Activated CD4-positive, alpha-beta T cell treated with anti-CD3 and anti-CD28 coated beads for 36 hours (primary cell): ENCODE measurements at regions of chr1 and their contacts with region 1.

Region 1: DNA sequence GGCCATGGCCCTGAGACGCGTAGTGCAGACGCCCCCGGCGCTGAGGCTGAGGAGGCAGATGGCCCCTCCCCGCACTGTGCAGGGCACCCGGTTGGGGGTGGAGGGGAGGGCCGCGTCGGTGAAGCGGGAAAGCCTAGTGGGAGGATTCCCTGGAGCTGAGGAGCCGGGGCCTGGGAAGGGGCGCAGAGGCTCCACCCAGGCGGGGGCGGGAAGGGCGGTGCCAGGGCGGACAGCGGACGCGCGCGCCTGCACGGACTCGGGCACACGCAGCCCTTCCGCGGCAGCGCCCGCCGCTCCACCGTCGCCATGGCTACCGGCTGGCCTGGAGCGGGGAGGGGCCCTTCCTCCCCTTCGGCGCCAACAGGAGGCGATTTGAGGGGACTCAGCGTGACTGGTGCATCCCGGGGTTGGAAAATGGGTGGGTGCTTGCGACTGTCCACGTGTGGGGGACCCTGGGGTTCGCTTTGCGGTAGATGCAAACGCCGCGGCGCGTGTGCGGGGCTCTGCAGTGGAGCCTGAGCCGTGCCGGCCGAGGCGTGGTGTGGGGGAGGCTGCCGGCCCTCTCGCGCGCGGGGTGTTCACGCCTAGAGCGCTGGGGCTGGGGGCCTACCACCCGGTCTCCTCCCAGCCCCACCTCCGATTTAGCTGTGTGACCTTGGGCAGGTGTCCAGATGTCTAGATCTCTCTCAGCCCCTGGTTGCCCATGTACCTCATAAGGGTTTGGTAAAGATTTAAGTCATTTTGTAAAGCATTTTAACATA is 35.1 kb downstream of the PTPRF start:
- DNase-seq: peak; percentile 81
- ATAC-seq: peak; percentile 87
- H3K4me3 Mint-ChIP-seq: peak overlapping the region; percentile 62
- H3K27ac Mint-ChIP-seq: no peak overlapping the region
- H3K4me1 Mint-ChIP-seq: no peaks in the 10 kb centered on the region
- H3K27me3 Mint-ChIP-seq: peaks cover 11% of the 10 kb centered on the region

Region 2: DNA sequence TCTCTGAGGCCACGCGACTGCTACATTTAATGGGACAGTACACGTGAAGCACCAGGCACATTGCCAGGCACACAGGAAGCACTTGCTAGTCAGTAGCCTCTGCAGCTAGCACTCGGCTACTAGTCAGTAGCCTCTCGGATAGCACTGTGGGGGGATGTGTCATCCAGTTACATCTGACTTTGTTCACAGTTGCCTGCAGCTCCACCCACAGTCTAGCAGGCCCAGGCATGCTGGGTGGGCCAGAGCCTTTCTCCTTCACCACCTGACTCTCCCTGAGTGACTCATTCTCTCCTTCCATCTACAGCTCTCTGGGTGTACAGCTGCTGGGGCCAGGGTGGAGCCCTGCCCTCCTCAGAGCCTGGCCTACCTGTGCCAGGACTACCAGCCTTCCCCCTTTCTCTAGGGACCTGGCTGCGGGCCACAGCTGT is 16.4 kb after region 1 on chr1:
- CTCF ChIA-PET with region 1: no interaction called
- POLR2A ChIA-PET with region 1: no interaction called
- intact Hi-C with region 1: loop called in 1 of 2 experiments (anchors 1 kb)
- DNase-seq: peak; percentile 75
- ATAC-seq: peak; percentile 99
- H3K4me3 Mint-ChIP-seq: no peak overlapping the region
- H3K27ac Mint-ChIP-seq: peak overlapping the region; percentile 52
- H3K4me1 Mint-ChIP-seq: peaks cover 4% of the 10 kb centered on the region
- H3K27me3 Mint-ChIP-seq: no peaks in the 10 kb centered on the region

Region 3: DNA sequence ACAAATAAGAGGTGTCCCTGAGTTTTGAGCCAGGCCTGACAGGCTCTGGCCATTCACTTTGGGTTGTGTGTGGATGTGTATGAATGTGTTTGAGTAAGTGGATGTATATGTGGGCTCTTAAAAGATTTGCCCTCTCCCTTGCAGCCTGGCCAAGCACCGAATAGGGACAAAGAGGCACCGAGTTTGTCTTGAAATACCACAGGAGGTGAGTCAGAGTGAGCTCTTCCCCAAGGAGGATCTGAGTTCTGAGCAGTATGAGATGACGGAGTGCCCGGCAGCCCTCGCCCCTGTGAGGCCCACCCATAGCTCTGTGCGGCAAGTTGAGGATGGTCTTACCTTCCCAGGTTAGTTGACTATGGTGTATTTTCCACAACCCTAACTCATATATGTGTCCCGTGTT is 103.2 kb after region 1 on chr1:
- CTCF ChIA-PET with region 1: no interaction called
- POLR2A ChIA-PET with region 1: no interaction called
- intact Hi-C with region 1: no loop called
- DNase-seq: no peak
- ATAC-seq: no peak
- H3K4me3 Mint-ChIP-seq: no peak overlapping the region
- H3K27ac Mint-ChIP-seq: no peak overlapping the region
- H3K4me1 Mint-ChIP-seq: peaks cover 8% of the 10 kb centered on the region
- H3K27me3 Mint-ChIP-seq: no peaks in the 10 kb centered on the region

Region 4: GRCh38 chr1:45512641-45513054 is 1946.9 kb after region 1 on chr1:
- CTCF ChIA-PET with region 1: no interaction called
- POLR2A ChIA-PET with region 1: no interaction called
- intact Hi-C with region 1: no loop called
- DNase-seq: peak; percentile 77
- ATAC-seq: peak; percentile 85
- H3K4me3 Mint-ChIP-seq: no peak overlapping the region
- H3K27ac Mint-ChIP-seq: no peak overlapping the region
- H3K4me1 Mint-ChIP-seq: peaks cover 11% of the 10 kb centered on the region
- H3K27me3 Mint-ChIP-seq: no peaks in the 10 kb centered on the region